ENCODE measurements at regions of chrX and their contacts with region 1.

Region 1: DNA sequence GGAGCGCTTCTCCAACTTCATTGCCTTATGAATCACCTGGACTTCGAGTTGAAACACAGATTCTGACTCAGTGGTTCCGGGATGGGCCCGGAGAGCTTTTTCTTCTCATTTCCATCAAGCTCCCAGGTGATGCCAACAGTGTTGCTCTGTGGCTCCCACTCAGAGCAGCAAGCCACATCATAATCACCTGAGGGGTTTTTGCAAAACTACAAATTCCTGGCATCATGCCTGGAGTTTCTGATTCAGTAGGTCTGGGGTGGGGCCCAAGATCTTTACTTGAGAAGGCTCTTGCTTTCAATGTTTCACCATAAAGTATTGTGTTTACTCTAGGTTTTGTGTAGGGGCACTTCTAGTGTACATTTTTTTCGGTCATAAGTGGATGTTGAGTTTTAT is 7.0 kb downstream of the MTM1 start:
- DNase-seq: peak; percentile 85
- H3K4me3 Mint-ChIP-seq: peak overlapping the region; percentile 62
- H3K27ac Mint-ChIP-seq: peak overlapping the region; percentile 97
- H3K4me1 Mint-ChIP-seq: peaks cover 76% of the 10 kb centered on the region
- H3K27me3 Mint-ChIP-seq: no peaks in the 10 kb centered on the region

Region 2: GRCh38 chrX:150200820-150201287 is 374.6 kb before region 1 on chrX:
- CTCF ChIA-PET with region 1: no interaction called
- intact Hi-C with region 1: loop called (anchors 1 kb)
- DNase-seq: peak; percentile 71
- H3K4me3 Mint-ChIP-seq: no peak overlapping the region
- H3K27ac Mint-ChIP-seq: no peak overlapping the region
- H3K4me1 Mint-ChIP-seq: peaks cover 5% of the 10 kb centered on the region
- H3K27me3 Mint-ChIP-seq: no peaks in the 10 kb centered on the region

Region 3: GRCh38 chrX:150303386-150304097 is 271.9 kb before region 1 on chrX:
- CTCF ChIA-PET with region 1: no interaction called
- intact Hi-C with region 1: no loop called
- DNase-seq: no peak
- H3K4me3 Mint-ChIP-seq: no peak overlapping the region
- H3K27ac Mint-ChIP-seq: no peak overlapping the region
- H3K4me1 Mint-ChIP-seq: no peaks in the 10 kb centered on the region
- H3K27me3 Mint-ChIP-seq: no peaks in the 10 kb centered on the region

Region 4: GRCh38 chrX:150486011-150486410 is 89.4 kb before region 1 on chrX:
- CTCF ChIA-PET with region 1: no interaction called
- intact Hi-C with region 1: loop called (anchors 1 kb)
- DNase-seq: peak; percentile 62
- H3K4me3 Mint-ChIP-seq: no peak overlapping the region
- H3K27ac Mint-ChIP-seq: no peak overlapping the region
- H3K4me1 Mint-ChIP-seq: peaks cover 27% of the 10 kb centered on the region
- H3K27me3 Mint-ChIP-seq: no peaks in the 10 kb centered on the region

Region 5: GRCh38 chrX:150536455-150537116 is 38.8 kb before region 1 on chrX:
- CTCF ChIA-PET with region 1: no interaction called
- intact Hi-C with region 1: no loop called
- DNase-seq: no peak
- H3K4me3 Mint-ChIP-seq: no peak overlapping the region
- H3K27ac Mint-ChIP-seq: no peak overlapping the region
- H3K4me1 Mint-ChIP-seq: no peaks in the 10 kb centered on the region
- H3K27me3 Mint-ChIP-seq: no peaks in the 10 kb centered on the region

Region 6: GRCh38 chrX:150587585-150588503 is 12.4 kb after region 1 on chrX:
- CTCF ChIA-PET with region 1: interaction called, 8 read pairs
- intact Hi-C with region 1: loop called (anchors 1 kb)
- DNase-seq: peak; percentile 65
- H3K4me3 Mint-ChIP-seq: no peak overlapping the region
- H3K27ac Mint-ChIP-seq: no peak overlapping the region
- H3K4me1 Mint-ChIP-seq: peaks cover 23% of the 10 kb centered on the region
- H3K27me3 Mint-ChIP-seq: no peaks in the 10 kb centered on the region

Region 7: DNA sequence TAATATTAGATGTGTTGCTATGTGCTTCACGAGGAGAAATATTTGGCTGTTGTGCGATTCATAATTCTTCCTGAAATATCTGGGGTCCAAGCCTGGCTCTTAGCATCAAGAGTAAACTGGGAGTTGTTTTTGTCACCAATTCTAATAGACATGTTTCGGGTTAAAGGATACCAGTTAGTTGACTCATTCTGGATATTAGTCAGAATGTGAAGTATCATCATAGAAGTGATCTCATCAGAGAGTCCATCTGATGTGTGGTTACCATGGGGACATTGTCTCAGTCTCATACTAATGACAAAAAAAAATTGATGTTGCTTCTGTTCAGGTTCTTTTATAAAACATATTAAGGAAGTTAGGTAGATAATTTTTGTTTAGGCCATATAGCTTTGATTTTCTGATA is 60.5 kb after region 1 on chrX:
- CTCF ChIA-PET with region 1: no interaction called
- intact Hi-C with region 1: loop called (anchors 1 kb)
- DNase-seq: peak; percentile 4
- H3K4me3 Mint-ChIP-seq: no peak overlapping the region
- H3K27ac Mint-ChIP-seq: no peak overlapping the region
- H3K4me1 Mint-ChIP-seq: peaks cover 7% of the 10 kb centered on the region
- H3K27me3 Mint-ChIP-seq: no peaks in the 10 kb centered on the region

Region 8: DNA sequence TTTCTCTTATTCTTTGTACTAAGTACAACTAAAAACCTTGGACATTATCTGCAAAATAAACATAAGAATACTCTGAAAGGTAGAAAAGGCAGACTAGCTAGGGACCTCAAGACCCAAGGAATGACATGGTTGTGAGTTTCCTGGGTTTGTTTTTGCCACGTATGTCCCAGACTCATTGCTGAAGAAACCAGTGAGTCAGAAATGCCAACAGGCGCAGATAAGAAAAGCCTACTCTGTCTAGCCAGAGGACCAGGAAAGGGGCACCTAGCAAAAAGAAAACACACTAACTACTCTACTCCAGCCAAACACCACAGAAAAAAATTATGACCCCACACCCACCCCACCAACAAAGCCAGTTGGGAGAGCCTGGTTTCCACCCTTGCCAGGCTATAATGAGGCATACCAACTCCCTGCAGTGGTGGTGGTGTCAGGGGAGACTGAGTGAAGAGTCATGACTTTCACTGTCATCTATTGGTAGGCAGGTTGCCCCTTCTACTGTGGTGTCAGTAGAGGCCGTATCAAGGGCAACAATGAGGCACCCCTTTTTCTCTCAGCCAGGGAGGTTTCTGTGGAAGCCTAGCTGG is 128.7 kb after region 1 on chrX:
- CTCF ChIA-PET with region 1: no interaction called
- intact Hi-C with region 1: loop called (anchors 2 kb)
- DNase-seq: peak; percentile 55
- H3K4me3 Mint-ChIP-seq: no peak overlapping the region
- H3K27ac Mint-ChIP-seq: peak overlapping the region; percentile 89
- H3K4me1 Mint-ChIP-seq: peaks cover 51% of the 10 kb centered on the region
- H3K27me3 Mint-ChIP-seq: no peaks in the 10 kb centered on the region

Region 9: GRCh38 chrX:150879855-150880808 is 304.7 kb after region 1 on chrX:
- CTCF ChIA-PET with region 1: no interaction called
- intact Hi-C with region 1: loop called (anchors 2 kb)
- DNase-seq: peak; percentile 8
- H3K4me3 Mint-ChIP-seq: no peak overlapping the region
- H3K27ac Mint-ChIP-seq: peak overlapping the region; percentile 54
- H3K4me1 Mint-ChIP-seq: peaks cover 36% of the 10 kb centered on the region
- H3K27me3 Mint-ChIP-seq: no peaks in the 10 kb centered on the region

Measured in activated naive CD4-positive, alpha-beta T cell treated with anti-CD3 and anti-CD28 coated beads for 36 hours (primary cell).